ENCODE measurements at regions of chr17 and their contacts with region 1.

Region 1: GRCh38 chr17:76397687-76398487 is 13.5 kb downstream of the SPHK1 start:
- DNase-seq: peak; percentile 93
- H3K4me3 ChIP-seq: no peak overlapping the region
- H3K27ac ChIP-seq: no peak overlapping the region
- H3K4me1 ChIP-seq: peaks cover 0 to 4% (median 4%) of the 10 kb centered on the region in 4 donors
- H3K27me3 ChIP-seq: no peaks in the 10 kb centered on the region
- CTCF ChIP-seq: peak; percentile 94 to 97 (median 94)
- EP300 ChIP-seq: no peak
- POLR2A ChIP-seq: no peak

Region 2: GRCh38 chr17:76271669-76272540 is 126.0 kb before region 1 on chr17:
- intact Hi-C with region 1: no loop called
- DNase-seq: no peak
- H3K4me3 ChIP-seq: peak overlapping the region; percentile 5 to 31 (median 28)
- H3K27ac ChIP-seq: peak overlapping the region; percentile 15 to 32 (median 23)
- H3K4me1 ChIP-seq: peaks cover 0 to 58% (median 51%) of the 10 kb centered on the region in 4 donors
- H3K27me3 ChIP-seq: no peaks in the 10 kb centered on the region
- CTCF ChIP-seq: no peak
- EP300 ChIP-seq: no peak
- POLR2A ChIP-seq: no peak

Region 3: DNA sequence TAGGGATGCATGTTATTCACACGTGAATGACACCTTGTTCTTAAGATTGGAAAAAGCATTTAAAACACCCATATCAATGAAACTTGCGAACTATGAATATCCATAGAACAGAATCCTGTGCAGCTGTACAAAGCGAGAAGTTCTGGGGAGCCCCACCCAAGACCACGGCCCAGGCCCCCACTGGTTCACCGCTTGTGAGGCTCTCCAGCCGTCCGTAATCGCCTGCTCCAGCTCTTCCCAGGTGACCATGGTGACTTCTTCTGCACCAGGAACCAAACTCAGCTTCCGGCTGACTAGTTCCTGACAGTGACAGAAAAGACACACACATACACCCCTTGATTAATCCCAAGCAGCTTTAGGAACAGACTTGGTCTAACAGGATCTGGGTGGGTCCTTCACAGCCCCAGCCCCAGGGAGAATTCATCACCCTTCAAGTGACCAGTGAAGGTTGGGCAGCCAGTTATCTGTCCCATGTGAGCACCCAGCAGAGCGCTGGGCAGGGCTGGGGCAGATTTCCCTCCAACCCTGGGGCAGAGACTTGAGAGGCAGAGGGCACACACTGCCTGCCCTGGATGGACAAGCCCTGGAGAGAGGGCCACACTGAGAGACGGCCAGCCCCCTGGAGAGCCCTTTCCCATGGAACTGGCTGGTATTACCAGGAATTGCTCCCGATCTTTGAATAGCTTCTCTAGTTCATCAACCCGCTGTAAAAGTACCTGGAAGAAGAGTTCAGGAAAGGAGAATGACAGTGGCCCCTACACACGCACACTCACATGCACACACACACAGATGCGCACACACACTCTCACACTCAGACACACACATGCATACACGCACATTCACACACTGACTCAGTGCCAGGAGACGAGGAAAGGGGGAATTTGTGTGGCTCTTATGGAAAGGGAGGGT is 93.4 kb before region 1 on chr17:
- intact Hi-C with region 1: loop called (anchors 1 kb)
- DNase-seq: peak; percentile 56
- H3K4me3 ChIP-seq: no peak overlapping the region
- H3K27ac ChIP-seq: no peak overlapping the region
- H3K4me1 ChIP-seq: no peaks in the 10 kb centered on the region
- H3K27me3 ChIP-seq: no peaks in the 10 kb centered on the region
- CTCF ChIP-seq: no peak
- EP300 ChIP-seq: no peak
- POLR2A ChIP-seq: no peak

Region 4: DNA sequence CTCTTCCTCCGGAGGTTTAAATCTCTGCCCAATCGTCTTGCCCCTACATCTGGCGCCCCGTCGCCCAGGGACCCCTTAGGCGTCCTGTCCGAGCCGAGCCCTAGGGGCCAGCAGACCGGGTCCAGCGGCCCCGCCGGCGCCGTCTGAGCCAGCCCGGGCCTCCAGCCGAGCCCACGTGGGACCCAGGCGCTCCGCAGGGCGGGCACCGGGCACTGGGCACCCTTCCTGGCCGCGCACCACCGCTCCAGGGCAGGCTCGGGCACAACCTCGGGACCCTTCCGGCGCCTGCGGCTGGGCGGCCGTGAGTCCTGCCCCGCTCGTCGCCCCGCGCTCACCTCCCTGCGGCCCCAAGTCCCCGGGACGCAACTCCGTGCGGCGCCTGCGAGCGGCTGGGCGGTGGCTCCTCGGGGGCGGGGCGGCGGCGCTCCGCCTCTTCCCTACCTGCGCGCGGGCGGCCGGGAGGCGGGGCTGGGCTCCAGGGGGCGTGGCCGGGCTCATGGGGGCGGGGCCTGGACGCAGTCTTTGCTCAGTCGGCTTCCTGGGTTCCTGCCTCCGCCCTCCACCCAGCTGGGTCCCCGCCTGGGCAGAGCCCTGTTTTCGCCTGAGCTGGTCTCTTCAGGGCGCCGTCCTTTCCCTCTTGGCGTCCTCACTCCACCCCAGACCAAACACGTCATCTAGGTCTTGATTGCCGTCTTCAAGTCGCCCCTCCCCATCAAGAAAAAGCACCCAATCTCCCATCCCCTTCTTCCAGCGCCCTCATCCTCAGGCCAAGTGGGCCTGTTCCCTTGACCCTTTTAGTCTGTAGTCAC is 103.3 kb after region 1 on chr17 and contains the start of gene RHBDF2:
- intact Hi-C with region 1: no loop called
- DNase-seq: peak; percentile 93
- H3K4me3 ChIP-seq: peak within 1 kb of the TSS; percentile 4 to 61 (median 52)
- H3K27ac ChIP-seq: peak within 1 kb of the TSS; percentile 73 to 78 (median 76)
- H3K4me1 ChIP-seq: peaks cover 0 to 39% (median 33%) of the 10 kb centered on the region in 4 donors
- H3K27me3 ChIP-seq: no peaks in the 10 kb centered on the region
- CTCF ChIP-seq: no peak
- EP300 ChIP-seq: no peak
- POLR2A ChIP-seq: no peak
- total RNA-seq, gene RHBDF2: 7.9 to 27.6 (median 12.5) TPM

Measured in sigmoid colon (tissue), 7 donors.